ENCODE measurements at regions of chr6 and their contacts with region 1.

Region 1: DNA sequence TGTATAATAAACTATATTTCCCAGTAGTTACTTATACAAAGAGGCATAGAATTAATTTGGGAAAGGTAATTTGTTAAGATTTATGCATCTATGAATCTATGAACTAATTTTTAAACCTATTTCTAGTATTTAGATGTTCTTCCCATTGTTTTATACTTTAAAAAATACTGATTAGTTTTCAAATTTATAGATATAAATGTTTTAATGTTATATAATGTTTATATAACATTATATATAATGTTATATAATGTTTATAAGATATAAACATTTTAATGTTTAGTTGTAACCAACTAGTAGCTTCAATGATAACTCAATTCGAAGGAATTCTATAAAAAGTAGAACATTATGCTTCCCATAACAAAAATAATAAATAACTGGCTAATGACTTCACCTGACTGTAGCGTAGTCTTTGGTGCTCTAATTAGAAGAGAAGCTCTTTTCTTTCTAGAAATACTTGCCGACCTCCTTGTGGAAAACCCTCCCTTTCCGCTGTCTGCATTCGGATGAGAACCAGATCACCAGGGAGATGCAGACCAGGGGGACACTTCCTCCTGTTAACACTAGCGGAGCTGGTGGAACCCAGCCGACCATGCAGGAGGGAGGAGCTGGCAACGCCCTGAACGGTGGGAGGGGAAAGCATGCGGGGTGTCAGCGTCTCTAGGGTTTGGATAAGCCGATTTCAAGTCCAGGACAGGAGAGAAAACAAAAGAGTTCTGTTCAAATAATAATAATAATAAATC is 158.4 kb downstream of the OR2B2 start:
- DNase-seq: peak; percentile 87
- H3K4me3 Mint-ChIP-seq: peak overlapping the region; percentile 79
- H3K27ac Mint-ChIP-seq: peak overlapping the region; percentile 88
- H3K4me1 Mint-ChIP-seq: peaks cover 33% of the 10 kb centered on the region
- H3K27me3 Mint-ChIP-seq: no peaks in the 10 kb centered on the region
- CTCF ChIP-seq: no peak

Region 2: DNA sequence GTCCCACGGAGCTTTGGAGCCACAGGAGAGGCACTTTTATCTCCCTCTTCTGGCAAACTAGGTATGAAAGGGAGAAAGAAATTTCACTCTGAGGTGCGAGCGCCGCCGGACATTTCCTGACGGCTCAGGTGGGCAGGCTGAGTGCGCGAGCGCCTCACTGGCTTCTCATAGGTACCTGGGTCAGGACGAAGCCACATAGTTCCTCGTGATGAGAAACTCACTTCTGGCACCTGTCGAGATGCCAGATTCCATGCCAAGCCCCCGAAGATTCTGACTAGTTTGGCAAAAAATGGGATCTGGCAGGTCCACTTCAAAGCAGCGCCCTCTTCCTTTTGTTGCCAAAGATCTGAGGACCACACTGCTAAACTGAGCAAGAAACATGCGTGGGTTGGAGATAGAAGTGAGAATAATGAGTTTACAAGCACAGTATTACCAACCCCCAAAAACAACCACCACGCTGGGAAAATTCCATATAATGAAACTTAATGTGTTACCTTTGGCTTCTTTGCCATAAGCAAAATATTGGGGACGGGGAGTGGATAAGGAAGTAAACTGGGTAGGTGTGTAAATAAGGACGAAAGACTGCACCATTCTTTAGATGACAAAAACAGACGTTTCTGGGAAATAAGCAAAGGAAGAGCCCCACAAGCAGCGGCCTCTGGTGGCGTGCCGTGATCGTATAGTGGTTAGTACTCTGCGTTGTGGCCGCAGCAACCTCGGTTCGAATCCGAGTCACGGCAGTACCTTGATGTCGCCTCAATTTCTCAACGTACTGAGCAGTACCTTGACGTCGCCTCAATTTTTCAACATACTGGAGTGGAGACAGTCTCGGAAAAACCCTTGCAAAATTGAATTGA is 596.2 kb before region 1 on chr6:
- CTCF ChIA-PET with region 1: no interaction called
- intact Hi-C with region 1: loop called (anchors 5 kb)
- DNase-seq: peak; percentile 79
- H3K4me3 Mint-ChIP-seq: peak overlapping the region; percentile 81
- H3K27ac Mint-ChIP-seq: peak overlapping the region; percentile 79
- H3K4me1 Mint-ChIP-seq: peaks cover 27% of the 10 kb centered on the region
- H3K27me3 Mint-ChIP-seq: no peaks in the 10 kb centered on the region
- CTCF ChIP-seq: peak; percentile 51

Region 3: DNA sequence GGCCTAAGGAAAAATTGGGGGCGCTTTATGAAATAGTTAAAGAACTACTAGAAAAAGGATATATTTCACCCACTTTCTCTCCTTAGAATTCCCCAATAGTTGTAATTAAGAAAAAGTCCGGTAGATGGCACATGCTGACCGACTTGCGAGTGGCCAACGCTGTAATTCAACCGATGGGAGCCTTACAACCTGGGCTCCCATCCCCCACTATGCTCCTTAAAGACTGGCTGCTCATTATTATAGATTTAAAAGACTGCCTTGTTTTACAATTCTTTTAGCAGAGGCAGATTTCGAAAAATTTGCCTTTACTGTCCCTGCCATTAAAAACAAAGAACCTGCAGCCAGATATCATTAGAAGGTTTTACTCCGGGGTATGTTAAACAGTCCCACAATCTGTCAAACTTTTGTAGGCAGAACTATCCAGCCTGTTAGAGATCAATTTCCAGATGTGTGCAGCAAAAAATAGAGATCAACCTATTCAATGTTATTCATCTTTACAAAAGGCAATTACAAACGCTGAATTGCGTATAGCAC is 564.9 kb before region 1 on chr6:
- CTCF ChIA-PET with region 1: interaction called, 4 read pairs
- intact Hi-C with region 1: loop called (anchors 5 kb)
- DNase-seq: peak; percentile 79
- H3K4me3 Mint-ChIP-seq: peak overlapping the region; percentile 78
- H3K27ac Mint-ChIP-seq: peak overlapping the region; percentile 55
- H3K4me1 Mint-ChIP-seq: peaks cover 9% of the 10 kb centered on the region
- H3K27me3 Mint-ChIP-seq: no peaks in the 10 kb centered on the region
- CTCF ChIP-seq: peak; percentile 71

Region 4: GRCh38 chr6:27518881-27519795 is 234.7 kb before region 1 on chr6:
- CTCF ChIA-PET with region 1: interaction called, 34 read pairs
- intact Hi-C with region 1: loop called (anchors 1 kb)
- DNase-seq: peak; percentile 72
- H3K4me3 Mint-ChIP-seq: peak overlapping the region; percentile 94
- H3K27ac Mint-ChIP-seq: peak overlapping the region; percentile 99
- H3K4me1 Mint-ChIP-seq: peaks cover 9% of the 10 kb centered on the region
- H3K27me3 Mint-ChIP-seq: no peaks in the 10 kb centered on the region
- CTCF ChIP-seq: peak; percentile 60

Region 5: GRCh38 chr6:27617700-27618689 is 135.8 kb before region 1 on chr6:
- CTCF ChIA-PET with region 1: interaction called, 6 read pairs
- intact Hi-C with region 1: loop called (anchors 5 kb)
- DNase-seq: peak; percentile 43
- H3K4me3 Mint-ChIP-seq: peak overlapping the region; percentile 77
- H3K27ac Mint-ChIP-seq: peak overlapping the region; percentile 36
- H3K4me1 Mint-ChIP-seq: peaks cover 7% of the 10 kb centered on the region
- H3K27me3 Mint-ChIP-seq: no peaks in the 10 kb centered on the region
- CTCF ChIP-seq: no peak

Region 6: GRCh38 chr6:27772261-27773001 is 18.6 kb after region 1 on chr6:
- CTCF ChIA-PET with region 1: interaction called, 13 read pairs
- intact Hi-C with region 1: no loop called
- DNase-seq: peak; percentile 94
- H3K4me3 Mint-ChIP-seq: no peak overlapping the region
- H3K27ac Mint-ChIP-seq: peak overlapping the region; percentile 21
- H3K4me1 Mint-ChIP-seq: peaks cover 25% of the 10 kb centered on the region
- H3K27me3 Mint-ChIP-seq: no peaks in the 10 kb centered on the region
- CTCF ChIP-seq: peak; percentile 95

Region 7: DNA sequence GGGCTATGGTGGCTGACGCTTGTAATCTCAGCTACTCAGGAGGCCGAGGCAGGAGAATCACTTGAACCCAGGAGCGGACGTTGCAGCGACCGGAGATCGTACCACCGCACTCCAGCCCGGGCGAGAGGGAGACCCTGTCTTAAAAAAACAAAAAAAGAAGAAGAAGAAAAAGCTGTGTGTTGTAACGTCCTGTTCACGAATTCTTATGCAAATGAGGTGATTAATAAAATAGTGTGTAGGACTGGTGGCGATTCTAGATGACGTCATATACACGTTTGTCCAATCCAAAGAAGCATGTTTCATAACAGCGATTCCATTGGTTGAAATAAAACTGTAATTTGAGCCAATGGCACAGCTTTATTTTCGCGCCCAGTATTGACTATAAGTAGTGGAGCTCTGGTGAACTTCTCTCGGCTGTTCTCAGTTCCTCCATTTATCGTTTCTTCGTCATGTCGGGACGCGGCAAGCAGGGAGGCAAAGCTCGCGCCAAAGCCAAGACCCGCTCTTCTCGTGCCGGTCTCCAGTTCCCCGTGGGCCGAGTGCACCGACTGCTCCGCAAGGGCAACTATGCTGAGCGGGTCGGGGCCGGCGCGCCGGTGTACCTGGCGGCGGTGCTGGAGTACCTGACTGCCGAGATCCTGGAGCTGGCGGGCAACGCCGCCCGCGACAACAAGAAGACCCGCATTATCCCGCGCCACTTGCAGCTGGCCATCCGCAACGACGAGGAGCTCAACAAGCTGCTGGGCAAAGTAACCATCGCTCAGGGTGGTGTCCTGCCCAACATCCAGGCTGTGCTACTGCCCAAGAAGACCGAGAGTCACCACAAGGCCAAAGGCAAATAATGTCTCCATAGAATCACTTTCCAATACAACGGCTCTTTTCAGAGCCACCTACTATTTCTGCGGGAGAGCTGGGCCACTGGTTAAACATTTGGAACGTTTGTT is 111.3 kb after region 1 on chr6:
- CTCF ChIA-PET with region 1: no interaction called
- intact Hi-C with region 1: no loop called
- DNase-seq: peak; percentile 76
- H3K4me3 Mint-ChIP-seq: peak overlapping the region; percentile 92
- H3K27ac Mint-ChIP-seq: peak overlapping the region; percentile 80
- H3K4me1 Mint-ChIP-seq: peaks cover 23% of the 10 kb centered on the region
- H3K27me3 Mint-ChIP-seq: no peaks in the 10 kb centered on the region
- CTCF ChIP-seq: no peak

Measured in Calu3 (cell line).